Cardiac septum (tissue), 1 donor: ENCODE measurements at regions of chr1 and their contacts with region 1.

Region 1: DNA sequence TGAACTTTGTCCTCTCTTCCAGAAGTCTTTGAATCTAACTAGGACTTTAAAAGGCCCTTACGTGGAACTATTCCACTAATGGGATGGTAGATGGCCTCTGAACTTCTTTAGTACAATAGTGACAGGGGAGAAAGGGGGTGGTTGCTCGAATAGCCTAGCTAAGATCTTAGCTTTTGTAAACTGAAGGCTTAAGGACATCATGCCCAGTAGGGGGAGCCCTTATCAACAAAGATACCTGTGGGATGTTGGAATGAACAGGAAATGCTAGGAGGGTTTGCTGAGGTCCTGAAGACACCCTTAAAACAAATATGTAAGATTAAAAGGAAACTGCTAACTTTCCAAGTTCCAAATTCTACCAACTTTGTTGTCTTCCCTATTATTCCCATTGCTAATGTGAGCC is 33.2 kb downstream of the NHLH2 start:
- DNase-seq: no peak

Region 2: GRCh38 chr1:115982400-115982799 is 174.7 kb after region 1 on chr1:
- intact Hi-C with region 1: loop called (anchors 2 kb)
- DNase-seq: no peak

Region 3: DNA sequence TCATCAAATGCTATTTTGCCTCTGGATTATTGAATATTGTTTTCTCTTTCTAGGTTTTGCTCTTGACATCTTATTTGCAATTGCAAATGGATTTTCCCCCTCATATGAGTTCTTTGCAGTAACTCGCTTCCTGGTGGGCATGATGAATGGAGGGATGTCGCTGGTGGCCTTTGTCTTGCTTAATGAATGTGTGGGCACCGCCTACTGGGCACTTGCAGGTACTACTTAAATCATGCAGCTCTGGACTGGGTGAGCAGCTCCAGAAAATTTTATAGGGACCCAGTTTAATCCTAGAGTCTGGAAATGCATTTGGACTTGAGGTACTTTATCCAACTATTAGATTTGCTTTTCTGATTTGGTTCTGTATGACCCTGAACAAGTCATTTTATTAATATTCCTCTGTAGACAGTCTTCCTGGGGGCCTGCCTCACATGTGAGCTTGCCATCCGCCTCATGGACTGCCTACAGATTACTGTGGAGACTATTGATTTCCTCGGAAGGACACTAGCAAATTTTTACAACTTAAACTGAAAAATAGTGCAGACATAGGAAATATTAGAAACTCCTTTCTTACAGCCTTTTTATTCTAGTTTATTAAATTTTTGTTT is 213.0 kb after region 1 on chr1:
- intact Hi-C with region 1: loop called (anchors 2 kb)
- DNase-seq: no peak